ENCODE measurements at regions of chr19 and their contacts with region 1.

Region 1: DNA sequence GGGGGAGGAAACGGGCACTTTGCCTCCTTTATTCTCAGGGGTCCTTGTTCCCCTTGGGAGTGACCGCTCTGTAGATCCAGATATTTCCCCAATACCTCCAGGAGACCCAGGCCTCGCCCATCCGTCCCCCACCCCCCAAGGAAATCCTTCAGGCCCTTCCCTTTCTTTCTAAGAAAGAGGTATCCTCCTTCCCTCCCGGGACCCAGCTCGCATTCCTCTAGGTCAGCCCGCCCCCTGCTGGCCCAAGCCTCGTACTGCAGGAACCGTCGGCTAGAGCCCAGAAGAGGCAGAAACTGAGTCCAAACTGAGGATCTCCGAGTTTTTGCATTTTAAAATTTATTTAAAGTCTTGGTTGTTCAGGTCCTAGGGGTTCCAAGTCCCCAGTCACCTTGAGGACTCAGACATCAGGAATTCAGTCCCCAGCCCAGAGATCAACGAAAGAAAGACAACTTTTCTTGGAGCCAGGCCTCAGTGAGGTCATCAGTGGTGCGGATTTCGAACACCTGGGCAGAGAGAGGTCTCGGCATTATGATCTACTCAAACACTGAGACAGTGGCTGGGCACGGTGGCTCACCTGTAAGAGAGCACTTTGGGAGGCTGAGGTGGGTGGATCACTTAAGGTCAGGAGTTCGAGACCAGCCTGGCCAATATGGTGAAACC is 7.5 kb upstream of the LRFN1 start:
- DNase-seq: peak; percentile 86
- H3K4me3 Mint-ChIP-seq: no peak overlapping the region
- H3K27ac Mint-ChIP-seq: peak overlapping the region; percentile 36
- H3K4me1 Mint-ChIP-seq: peaks cover 40% of the 10 kb centered on the region
- H3K27me3 Mint-ChIP-seq: no peaks in the 10 kb centered on the region

Region 2: GRCh38 chr19:39212375-39212742 is 115.8 kb before region 1 on chr19:
- CTCF ChIA-PET with region 1: interaction called, 16 read pairs
- POLR2A ChIA-PET with region 1: no interaction called
- intact Hi-C with region 1: loop called (anchors 1 kb)
- DNase-seq: peak; percentile 80
- H3K4me3 Mint-ChIP-seq: no peak overlapping the region
- H3K27ac Mint-ChIP-seq: no peak overlapping the region
- H3K4me1 Mint-ChIP-seq: no peaks in the 10 kb centered on the region
- H3K27me3 Mint-ChIP-seq: peaks cover 4% of the 10 kb centered on the region

Region 3: DNA sequence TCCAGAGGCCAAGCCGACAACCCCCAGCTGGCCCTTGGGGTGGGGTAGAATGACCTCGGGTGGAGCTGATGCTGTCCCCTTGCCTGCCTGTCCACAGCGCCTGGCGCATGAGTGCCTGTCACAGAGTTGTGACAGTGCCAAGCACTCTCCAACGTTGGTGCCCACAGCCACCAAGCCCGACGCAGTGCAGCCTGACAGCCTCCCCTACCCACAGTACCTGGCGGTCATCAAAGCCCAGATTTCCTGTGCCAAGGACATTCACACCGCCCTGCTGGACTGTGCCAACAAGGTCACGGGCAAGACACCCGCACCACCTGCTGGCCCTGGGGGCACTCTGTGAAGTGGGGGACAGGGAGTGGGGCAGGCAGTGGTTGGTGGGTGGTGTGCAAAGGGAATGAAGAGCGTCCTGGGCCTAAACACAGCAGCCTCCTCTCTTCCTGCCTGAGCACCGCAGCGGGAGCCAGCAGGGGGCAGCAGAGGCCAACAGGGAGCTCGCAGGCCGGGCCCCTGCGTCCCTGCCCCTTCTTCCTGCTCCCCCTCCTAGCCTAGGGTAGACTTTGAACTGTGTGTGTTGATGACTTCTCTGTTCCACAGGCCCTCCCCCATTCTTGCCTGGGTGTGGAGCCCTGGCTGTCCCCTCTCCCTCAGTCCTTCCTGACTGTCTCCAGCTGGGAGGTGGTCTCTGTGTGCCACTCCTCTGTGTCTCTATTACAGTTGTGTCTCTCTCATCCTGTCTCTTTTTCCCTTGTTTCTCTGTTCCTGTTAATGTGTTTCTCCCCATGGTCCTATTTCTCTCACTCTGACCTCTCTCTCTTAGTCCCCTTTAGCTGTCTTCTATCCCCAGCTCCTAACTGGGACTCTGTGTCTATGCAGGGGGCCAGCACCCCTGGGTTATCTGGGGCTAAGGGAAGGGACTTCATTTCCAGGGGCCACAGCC is 69.5 kb after region 1 on chr19:
- CTCF ChIA-PET with region 1: interaction called, 11 read pairs
- POLR2A ChIA-PET with region 1: no interaction called
- intact Hi-C with region 1: no loop called
- DNase-seq: peak; percentile 96
- H3K4me3 Mint-ChIP-seq: peak overlapping the region; percentile 3
- H3K27ac Mint-ChIP-seq: peak overlapping the region; percentile 85
- H3K4me1 Mint-ChIP-seq: peaks cover 57% of the 10 kb centered on the region
- H3K27me3 Mint-ChIP-seq: no peaks in the 10 kb centered on the region

Measured in activated CD4-positive, alpha-beta memory T cell treated with anti-CD3 and anti-CD28 coated beads for 36 hours (primary cell).